ENCODE measurements at regions of chr11 and their contacts with region 1.

Region 1: DNA sequence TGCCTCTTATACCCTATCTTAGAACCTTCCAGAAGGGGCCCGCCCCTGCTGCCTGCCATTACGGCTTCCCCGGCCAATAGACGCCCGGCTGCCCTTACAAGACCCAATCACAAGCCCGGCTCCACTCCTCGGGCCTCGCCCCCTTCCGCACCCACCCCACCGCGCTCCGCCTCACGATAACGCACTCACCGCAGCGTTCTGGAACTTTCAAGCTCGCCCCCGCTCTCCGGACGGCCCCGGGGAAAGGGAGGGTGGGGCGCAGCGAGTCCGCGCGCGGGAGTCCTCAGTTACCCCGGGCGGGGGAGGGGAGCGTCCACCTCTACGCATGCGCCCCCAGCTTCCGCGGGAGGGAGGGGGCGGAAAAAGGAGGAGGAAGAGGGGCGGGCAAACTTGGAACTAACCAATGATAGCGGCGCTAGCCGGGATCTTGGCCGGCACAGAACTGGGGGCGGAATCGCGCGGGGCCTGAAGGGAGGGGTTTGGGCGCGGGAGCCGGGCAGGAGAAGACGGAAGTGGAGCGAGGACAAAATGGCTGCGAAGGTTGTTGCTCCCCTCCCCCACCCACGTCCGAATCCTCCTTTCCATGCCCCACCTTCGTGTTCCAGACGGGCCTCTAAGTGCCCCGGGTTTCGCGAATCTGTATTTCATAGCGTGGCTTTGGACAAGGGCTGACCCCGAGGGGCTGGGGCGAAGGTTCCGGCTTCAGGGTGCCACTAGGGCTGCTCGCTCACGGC is 389 bp upstream of the HSPA8 start:
- DNase-seq: peak; percentile 92

Region 2: GRCh38 chr11:122954455-122954854 is 107.9 kb before region 1 on chr11:
- CTCF ChIA-PET with region 1: no interaction called
- POLR2A ChIA-PET with region 1: no interaction called
- DNase-seq: no peak

Region 3: GRCh38 chr11:123046473-123047259 is 15.7 kb before region 1 on chr11:
- CTCF ChIA-PET with region 1: no interaction called
- POLR2A ChIA-PET with region 1: interaction called, 20 read pairs
- DNase-seq: no peak

Region 4: DNA sequence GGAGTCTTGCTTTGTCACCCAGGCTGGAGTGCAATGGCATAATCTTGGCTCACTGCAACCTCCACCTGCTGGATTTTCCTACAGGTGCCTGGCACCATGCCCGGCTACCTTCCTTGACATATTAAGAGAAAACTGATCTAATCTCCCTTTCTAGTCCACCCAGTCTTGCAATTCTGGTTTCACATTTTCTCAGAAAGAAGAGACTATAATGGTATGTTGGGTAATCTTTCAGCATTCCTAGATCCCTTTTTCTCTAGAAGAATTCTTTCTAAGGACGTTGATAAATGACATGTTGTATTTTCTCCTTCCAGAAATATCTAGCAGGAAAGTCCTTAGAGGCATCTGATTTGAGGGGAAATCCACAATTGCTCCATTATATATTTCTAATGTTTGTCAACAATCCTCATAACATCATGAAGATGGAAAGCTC is 10.0 kb after region 1 on chr11:
- CTCF ChIA-PET with region 1: no interaction called
- POLR2A ChIA-PET with region 1: interaction called, 11 read pairs
- DNase-seq: no peak

Region 5: DNA sequence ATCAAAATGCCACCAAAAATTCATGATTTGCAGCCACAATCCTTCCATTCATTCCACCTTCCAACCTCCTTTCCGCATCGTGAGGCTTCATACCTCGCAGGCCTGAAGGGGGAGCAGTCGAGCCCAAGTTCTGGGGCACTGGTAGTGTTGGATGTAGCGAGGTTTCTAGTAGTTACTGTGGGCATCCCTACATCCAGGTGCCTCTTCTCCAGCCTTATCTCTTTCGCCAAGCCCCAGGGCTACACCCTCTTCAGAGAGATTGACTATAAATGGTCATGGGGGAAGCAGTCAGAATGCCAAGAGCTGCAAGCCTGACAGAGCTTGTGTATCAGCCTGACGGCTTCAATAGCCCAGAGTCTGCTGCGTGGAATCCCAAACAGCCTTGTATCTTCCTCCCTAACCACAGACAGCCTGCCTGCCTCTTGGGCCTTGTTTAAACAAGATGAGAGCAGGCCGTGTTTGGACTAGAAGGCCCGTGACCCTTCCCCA is 103.8 kb after region 1 on chr11:
- CTCF ChIA-PET with region 1: no interaction called
- POLR2A ChIA-PET with region 1: no interaction called
- DNase-seq: peak; percentile 63

Region 6: GRCh38 chr11:123334925-123335324 is 272.6 kb after region 1 on chr11:
- CTCF ChIA-PET with region 1: no interaction called
- POLR2A ChIA-PET with region 1: no interaction called
- DNase-seq: no peak

Measured in HEK293T (cell line).